Head of caudate nucleus (tissue), 42 donors: ENCODE measurements at regions of chr13 and their contacts with region 1.

Region 1: GRCh38 chr13:44969551-44970484 is 19.5 kb downstream of the NUFIP1 start:
- DNase-seq: peak in 17 of 42 donors; percentile 6 to 73 (median 40)

Region 2: DNA sequence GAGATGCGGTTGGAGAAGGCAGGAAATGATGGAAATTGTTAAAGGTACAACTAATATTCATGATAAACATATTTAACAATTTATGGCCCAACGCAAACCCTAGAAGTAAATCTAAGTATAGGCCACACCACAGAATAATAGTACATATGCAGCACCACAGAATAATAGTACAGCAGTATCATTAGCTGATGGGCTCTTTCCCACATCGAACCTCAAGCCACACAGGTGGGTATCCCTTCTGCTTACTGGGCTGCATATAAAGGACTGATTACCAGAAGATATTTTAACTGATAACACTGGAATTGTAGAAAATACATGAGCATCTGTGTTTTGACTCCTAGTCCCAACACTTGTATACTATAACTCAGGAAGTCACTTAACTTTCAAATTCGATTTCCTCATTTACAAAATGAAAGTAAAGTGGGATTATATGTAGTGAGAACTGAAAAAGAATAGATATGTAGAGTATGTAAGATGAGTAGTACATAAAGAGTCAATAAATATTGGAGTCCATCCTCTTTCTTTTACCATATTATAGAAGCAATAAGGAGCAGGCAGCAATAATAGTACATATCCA is 485.2 kb before region 1 on chr13:
- intact Hi-C with region 1: loop called (anchors 5 kb)
- DNase-seq: no peak

Region 3: DNA sequence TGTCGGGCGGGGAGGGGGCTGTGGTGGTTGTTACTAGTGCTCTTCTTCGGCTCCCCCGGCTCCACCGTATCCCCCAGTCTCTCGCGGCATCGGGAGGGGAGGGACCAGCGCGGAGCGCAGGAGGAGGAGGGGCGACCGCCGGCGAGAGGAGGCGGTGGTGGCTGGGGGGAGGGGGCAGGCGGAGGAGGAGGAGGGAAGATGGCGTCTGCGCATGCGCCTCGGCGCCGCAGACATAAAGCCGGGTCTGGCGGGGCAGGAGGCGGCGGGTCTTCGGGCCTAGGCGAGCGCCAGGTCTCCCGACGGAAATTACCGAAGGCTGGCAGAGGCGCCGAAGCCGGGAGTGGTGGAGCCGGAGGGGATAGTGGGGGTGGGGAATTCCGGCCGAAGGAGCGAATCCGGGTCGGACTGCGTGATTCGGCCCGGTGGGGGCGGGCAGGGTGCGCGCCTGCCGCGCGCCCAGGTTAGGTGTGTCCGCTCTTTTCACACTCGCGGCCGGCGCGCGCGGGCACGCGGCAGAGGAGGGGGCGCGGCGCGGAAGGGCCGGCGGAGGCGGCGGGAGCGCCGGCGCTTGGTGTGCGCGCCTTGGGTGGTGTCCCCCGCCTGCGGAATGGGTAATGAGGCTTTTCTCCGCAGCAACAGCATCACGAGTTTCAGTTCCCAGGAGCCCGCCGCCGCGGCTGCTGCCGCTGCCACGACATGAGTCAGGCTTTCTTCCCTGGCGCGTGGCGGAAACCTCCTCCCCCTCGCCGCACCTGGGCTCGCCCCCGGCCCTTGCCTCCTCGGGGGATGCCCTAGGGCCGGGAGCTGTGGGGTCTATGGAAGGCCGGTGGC is 392.4 kb before region 1 on chr13:
- intact Hi-C with region 1: loop called (anchors 10 kb)
- DNase-seq: peak; percentile 80 to 98 (median 95)

Region 4: GRCh38 chr13:44917589-44918325 is 52.1 kb before region 1 on chr13:
- intact Hi-C with region 1: loop called (anchors 10 kb)
- DNase-seq: peak; percentile 88 to 99 (median 96)

Region 5: DNA sequence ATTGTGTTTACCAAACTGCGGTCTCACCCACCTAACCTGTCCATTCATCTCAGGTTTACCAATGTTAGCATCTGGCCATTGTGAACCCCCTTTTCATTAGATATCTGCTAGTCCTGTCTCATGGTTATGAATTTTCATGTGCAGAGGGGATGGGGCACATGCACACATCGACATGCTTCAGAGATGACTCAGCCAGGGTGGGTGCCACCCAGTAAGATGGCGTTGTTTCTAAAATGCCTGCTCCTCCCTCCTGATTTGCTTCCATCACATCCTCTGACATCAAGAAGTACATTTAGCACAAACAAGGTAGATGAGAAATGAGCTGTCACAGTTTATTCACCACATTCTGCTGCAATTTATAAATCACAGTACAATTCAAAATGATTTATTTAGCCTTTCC is 70.8 kb after region 1 on chr13:
- intact Hi-C with region 1: no loop called
- DNase-seq: peak in 2 of 42 donors; percentile 13 to 26

Region 6: GRCh38 chr13:45092663-45093062 is 122.8 kb after region 1 on chr13:
- intact Hi-C with region 1: no loop called
- DNase-seq: no peak

Region 7: GRCh38 chr13:45301243-45301642 is 331.4 kb after region 1 on chr13:
- intact Hi-C with region 1: loop called (anchors 10 kb)
- DNase-seq: peak in 1 of 42 donors; percentile 10

Region 8: DNA sequence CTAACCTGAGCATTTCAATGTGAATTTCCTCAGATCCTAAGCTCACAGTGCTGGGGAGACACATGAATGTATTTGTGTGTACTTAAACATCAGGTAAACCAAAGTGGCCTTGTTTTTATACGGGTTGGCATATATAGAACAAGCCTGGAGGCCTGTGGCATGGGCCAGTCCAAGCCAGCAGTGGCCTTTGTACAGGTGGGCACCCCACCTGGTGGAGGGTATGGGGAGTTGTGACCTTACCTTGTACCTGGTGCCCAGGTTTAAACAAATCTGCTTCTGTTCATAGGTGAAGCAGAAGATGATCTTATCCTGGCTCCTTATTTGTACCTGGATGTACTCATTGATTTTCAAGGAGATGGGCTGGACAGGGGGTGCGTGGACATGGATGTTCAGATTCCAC is 574.7 kb after region 1 on chr13:
- intact Hi-C with region 1: no loop called
- DNase-seq: no peak